ENCODE measurements at regions of chr16 and their contacts with region 1.

Region 1: GRCh38 chr16:15523092-15523541 is 88.7 kb downstream of the BMERB1 start:
- DNase-seq: peak; percentile 57
- H3K4me3 ChIP-seq: peak overlapping the region in 2 of 4 donors; percentile 23 to 28
- H3K27ac ChIP-seq: peak overlapping the region in 2 of 4 donors; percentile 49 to 57
- H3K4me1 ChIP-seq: peaks cover 0 to 37% (median 10%) of the 10 kb centered on the region in 4 donors
- H3K27me3 ChIP-seq: no peaks in the 10 kb centered on the region
- CTCF ChIP-seq: peak in 4 of 5 experiments; percentile 29 to 66 (median 42)
- EP300 ChIP-seq: no peak
- POLR2A ChIP-seq: no peak

Region 2: DNA sequence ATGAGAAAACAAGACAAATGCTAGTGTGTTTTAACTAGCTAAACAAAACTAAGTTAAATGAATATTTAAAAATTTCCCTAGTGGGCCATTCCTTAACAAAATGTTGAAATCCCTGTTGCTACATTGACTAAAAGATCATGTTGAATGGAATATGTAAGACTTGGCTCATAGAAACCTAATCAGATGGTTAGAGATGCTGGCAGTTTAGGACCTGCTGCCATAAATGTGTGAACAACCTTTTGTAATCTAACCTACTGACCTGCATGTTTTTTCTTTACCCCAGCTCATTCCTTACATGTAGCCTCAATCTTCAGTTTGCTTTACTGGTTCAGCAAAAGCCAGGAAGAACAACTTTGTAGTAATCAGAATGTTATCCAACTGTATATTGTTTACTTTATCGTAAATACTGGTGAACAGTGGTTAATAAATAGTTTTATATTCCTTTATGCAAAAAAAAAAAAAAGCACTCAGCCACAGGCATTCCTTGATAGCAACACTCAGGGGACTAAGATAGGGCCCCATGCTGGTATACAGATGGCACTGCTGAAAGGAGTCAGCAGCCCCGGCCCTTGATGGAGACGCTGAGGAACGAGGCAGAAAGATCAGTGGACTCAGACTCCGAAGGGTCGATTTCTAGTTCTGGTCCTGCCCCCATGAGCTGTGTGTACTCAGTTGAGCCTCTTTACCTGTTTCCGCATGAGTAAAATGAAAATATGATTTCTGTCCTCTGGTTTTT is 41.7 kb after region 1 on chr16:
- in situ Hi-C with region 1: no loop called
- intact Hi-C with region 1: no loop called
- DNase-seq: no peak
- H3K4me3 ChIP-seq: no peak overlapping the region
- H3K27ac ChIP-seq: no peak overlapping the region
- H3K4me1 ChIP-seq: peaks cover 0 to 8% (median 0%) of the 10 kb centered on the region in 4 donors
- H3K27me3 ChIP-seq: no peaks in the 10 kb centered on the region
- CTCF ChIP-seq: no peak
- EP300 ChIP-seq: no peak
- POLR2A ChIP-seq: no peak

Region 3: GRCh38 chr16:15581127-15581815 is 58.2 kb after region 1 on chr16:
- in situ Hi-C with region 1: loop called in 1 of 4 experiments (anchors 10 kb)
- intact Hi-C with region 1: no loop called
- DNase-seq: no peak
- H3K4me3 ChIP-seq: no peak overlapping the region
- H3K27ac ChIP-seq: no peak overlapping the region
- H3K4me1 ChIP-seq: peaks cover 0 to 25% (median 12%) of the 10 kb centered on the region in 4 donors
- H3K27me3 ChIP-seq: no peaks in the 10 kb centered on the region
- CTCF ChIP-seq: no peak
- EP300 ChIP-seq: no peak
- POLR2A ChIP-seq: no peak

Region 4: GRCh38 chr16:17134586-17134985 is 1611.5 kb after region 1 on chr16:
- in situ Hi-C with region 1: no loop called
- intact Hi-C with region 1: no loop called
- DNase-seq: no peak
- H3K4me3 ChIP-seq: no peak overlapping the region
- H3K27ac ChIP-seq: no peak overlapping the region
- H3K4me1 ChIP-seq: no peaks in the 10 kb centered on the region
- H3K27me3 ChIP-seq: no peaks in the 10 kb centered on the region
- CTCF ChIP-seq: no peak
- EP300 ChIP-seq: no peak
- POLR2A ChIP-seq: no peak

Measured in transverse colon (tissue), 4 donors.